Heart right ventricle (tissue), 16 donors: ENCODE measurements at regions of chr4 and their contacts with region 1.

Region 1: GRCh38 chr4:39103291-39103690 is 41.3 kb downstream of the KLHL5 start:
- DNase-seq: no peak
- ATAC-seq: no peak
- H3K4me3 ChIP-seq: no peak overlapping the region
- H3K27ac ChIP-seq: no peak overlapping the region
- H3K4me1 ChIP-seq: peaks cover 0 to 3% (median 0%) of the 10 kb centered on the region in 9 donors
- H3K27me3 ChIP-seq: no peaks in the 10 kb centered on the region
- CTCF ChIP-seq: peak in 1 of 9 donors; percentile 13

Region 2: DNA sequence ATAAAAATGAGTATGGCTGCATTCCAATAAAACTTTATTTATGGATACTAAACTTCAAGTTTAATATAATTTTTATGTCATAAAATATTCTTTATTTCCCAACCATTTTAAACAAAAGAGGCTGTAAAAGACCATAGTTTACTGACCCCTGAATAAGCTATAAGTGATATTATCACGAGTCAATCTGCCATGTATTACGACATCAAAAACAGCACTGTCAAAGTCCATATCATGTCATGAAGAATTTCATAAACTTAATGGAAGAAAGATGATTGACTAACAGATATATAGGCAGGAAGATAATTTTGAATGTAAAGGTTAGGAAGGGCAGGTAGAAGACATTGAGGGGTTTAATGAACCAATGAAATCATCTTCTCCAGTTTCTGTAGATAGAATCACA is 89.3 kb before region 1 on chr4:
- intact Hi-C with region 1: no loop called
- DNase-seq: no peak
- ATAC-seq: no peak
- H3K4me3 ChIP-seq: no peak overlapping the region
- H3K27ac ChIP-seq: no peak overlapping the region
- H3K4me1 ChIP-seq: no peaks in the 10 kb centered on the region
- H3K27me3 ChIP-seq: no peaks in the 10 kb centered on the region
- CTCF ChIP-seq: no peak

Region 3: DNA sequence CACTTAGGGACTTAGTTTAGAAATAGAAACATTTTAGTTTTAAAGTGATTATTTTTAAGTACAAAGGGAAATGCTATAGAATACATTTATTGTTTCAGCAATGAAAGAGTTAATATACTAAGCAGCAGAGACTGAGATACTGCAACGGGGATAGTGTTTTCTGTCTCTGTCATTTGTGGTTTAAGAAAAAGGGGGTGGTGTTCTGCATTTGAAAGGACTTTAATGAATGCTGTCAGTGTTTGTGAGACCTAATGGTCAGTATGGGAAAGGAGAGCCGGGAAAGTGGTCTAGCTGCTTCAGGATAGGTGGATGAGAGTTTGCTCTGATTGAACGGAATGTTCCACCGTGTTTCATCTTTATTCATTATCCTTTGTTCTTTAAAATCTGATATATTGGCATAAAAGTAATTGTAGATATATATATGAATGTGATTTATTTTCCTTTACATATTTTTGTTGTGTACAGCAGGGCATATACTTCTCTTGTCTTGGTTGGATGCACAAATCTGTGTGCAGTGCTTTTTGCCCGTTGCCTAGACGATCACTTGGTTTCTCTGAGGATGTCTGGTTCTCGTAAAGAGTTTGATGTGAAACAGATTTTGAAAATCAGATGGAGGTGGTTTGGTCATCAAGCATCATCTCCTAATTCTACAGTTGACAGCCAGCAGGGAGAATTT is 41.1 kb before region 1 on chr4 and contains the start of gene KLHL5:
- intact Hi-C with region 1: loop called in 1 of 10 experiments (anchors 5 kb)
- DNase-seq: no peak
- ATAC-seq: no peak
- H3K4me3 ChIP-seq: no peak within 1 kb of the TSS
- H3K27ac ChIP-seq: no peak within 1 kb of the TSS
- H3K4me1 ChIP-seq: peaks cover 0 to 15% (median 0%) of the 10 kb centered on the region in 9 donors
- H3K27me3 ChIP-seq: no peaks in the 10 kb centered on the region
- CTCF ChIP-seq: no peak
- total RNA-seq, gene KLHL5: 8.5 to 22.7 (median 13.1) TPM